ENCODE measurements at regions of chr3 and their contacts with region 1.

Region 1: DNA sequence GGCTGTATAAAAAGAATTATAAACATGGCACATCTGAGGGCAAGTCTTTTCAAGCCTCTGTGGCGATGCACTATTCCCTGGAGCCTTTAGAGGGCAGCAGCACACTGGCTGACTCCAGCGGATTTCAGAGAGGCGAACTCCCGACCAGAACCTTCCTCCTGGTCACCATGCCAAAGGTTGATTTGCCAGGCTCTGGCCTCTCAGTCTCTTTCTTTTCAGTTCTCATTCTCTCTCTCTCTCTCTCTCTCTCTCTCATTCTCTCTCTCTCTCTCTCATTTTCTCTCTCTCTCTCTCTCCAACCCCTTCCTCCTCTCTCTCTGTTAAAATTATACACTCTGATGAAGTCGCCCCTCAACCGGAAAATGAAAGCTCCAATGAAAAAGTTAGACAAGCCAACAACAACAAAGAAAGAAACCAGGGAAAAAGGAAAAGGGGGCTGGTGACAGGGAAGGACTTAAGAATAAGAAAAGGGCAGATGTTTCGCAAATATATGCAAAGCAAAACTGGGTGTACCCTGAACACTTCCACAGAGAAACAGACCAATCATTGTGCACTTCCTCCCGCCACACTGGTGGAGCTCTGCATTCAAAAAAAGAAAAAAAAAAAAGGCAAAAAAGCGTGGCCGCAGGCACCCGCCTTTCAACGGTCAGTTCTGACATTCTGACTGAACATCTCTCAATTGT is 90.2 kb downstream of the TIGIT start:
- DNase-seq: peak; percentile 71
- H3K4me3 ChIP-seq: peak overlapping the region; percentile 32
- H3K27ac ChIP-seq: no peak overlapping the region
- H3K4me1 ChIP-seq: peaks cover 5% of the 10 kb centered on the region
- CTCF ChIP-seq: peak; percentile 93

Region 2: GRCh38 chr3:113828600-113828999 is 555.4 kb before region 1 on chr3:
- CTCF ChIA-PET with region 1: no interaction called
- POLR2A ChIA-PET with region 1: no interaction called
- intact Hi-C with region 1: no loop called
- DNase-seq: no peak
- H3K4me3 ChIP-seq: no peak overlapping the region
- H3K27ac ChIP-seq: no peak overlapping the region
- H3K4me1 ChIP-seq: peaks cover 40% of the 10 kb centered on the region
- CTCF ChIP-seq: no peak

Region 3: GRCh38 chr3:114418724-114419543 is 34.9 kb after region 1 on chr3:
- CTCF ChIA-PET with region 1: no interaction called
- POLR2A ChIA-PET with region 1: interaction called, 4 read pairs
- intact Hi-C with region 1: loop called (anchors 2 kb)
- DNase-seq: peak; percentile 72
- H3K4me3 ChIP-seq: no peak overlapping the region
- H3K27ac ChIP-seq: no peak overlapping the region
- H3K4me1 ChIP-seq: no peaks in the 10 kb centered on the region
- CTCF ChIP-seq: peak; percentile 95

Region 4: GRCh38 chr3:114447545-114447944 is 63.5 kb after region 1 on chr3:
- CTCF ChIA-PET with region 1: no interaction called
- POLR2A ChIA-PET with region 1: interaction called, 5 read pairs
- intact Hi-C with region 1: loop called (anchors 1 kb)
- DNase-seq: peak; percentile 18
- H3K4me3 ChIP-seq: no peak overlapping the region
- H3K27ac ChIP-seq: no peak overlapping the region
- H3K4me1 ChIP-seq: peaks cover 38% of the 10 kb centered on the region
- CTCF ChIP-seq: peak; percentile 54; the same call in 1 of the 2 replicates

Region 5: GRCh38 chr3:114527036-114527644 is 143.1 kb after region 1 on chr3:
- CTCF ChIA-PET with region 1: no interaction called
- POLR2A ChIA-PET with region 1: no interaction called
- intact Hi-C with region 1: loop called (anchors 10 kb)
- DNase-seq: peak; percentile 2
- H3K4me3 ChIP-seq: no peak overlapping the region
- H3K27ac ChIP-seq: no peak overlapping the region
- H3K4me1 ChIP-seq: no peaks in the 10 kb centered on the region
- CTCF ChIP-seq: peak; percentile 77

Region 6: GRCh38 chr3:114619771-114620170 is 235.8 kb after region 1 on chr3:
- CTCF ChIA-PET with region 1: no interaction called
- POLR2A ChIA-PET with region 1: no interaction called
- intact Hi-C with region 1: no loop called
- DNase-seq: no peak
- H3K4me3 ChIP-seq: no peak overlapping the region
- H3K27ac ChIP-seq: no peak overlapping the region
- H3K4me1 ChIP-seq: no peaks in the 10 kb centered on the region
- CTCF ChIP-seq: no peak

Measured in OCI-LY7 (cell line).